Activated CD8-positive, alpha-beta T cell treated with anti-CD3 and anti-CD28 coated beads, Interleukin-2, amount 10 ng/mL, durations not matched to agents 7 days and 5 days (primary cell): ENCODE measurements at regions of chr17 and their contacts with region 1.

Region 1: DNA sequence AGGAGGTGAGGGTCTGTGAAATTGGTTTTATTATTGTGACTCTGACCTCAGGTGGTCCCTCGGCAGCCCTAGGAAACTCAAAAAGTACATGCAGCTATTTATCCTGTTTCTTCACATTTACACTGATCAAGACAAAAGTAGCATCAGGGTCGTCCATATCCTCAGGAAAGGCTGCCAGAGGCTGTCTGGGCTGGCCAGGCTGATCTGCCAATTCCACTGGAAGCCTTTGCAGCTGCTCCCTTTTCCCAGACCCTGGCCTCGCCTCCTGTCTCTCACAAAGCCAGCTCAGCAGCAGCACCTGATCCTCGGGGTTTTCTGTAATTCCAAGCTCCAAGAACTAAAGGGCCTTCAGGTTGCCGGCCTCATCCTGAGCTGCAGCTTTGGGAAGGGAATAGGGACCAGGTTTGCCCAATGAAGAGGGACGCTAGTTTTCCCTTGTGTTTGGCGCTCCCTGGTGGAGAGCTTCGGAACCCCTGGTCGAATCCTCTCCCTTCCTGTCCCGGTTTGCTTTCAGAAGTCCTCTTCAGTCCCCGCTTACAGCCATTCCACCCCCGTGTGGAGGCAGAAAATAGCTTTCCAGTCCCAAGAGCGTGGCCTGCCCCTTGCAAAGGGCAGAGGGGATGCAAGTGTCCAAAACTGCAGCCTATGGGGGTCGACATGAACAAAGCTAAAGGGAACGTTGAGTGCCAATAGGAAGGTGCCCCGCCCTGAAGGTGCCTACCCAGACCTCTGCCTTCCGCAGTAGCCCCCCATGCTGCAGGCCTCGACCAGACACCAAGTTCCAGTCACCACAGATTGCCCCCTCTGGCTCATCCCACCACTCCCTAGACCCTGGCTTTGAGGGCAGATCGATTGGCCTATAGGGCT is 13.4 kb downstream of the MFSD6L start:
- DNase-seq: peak; percentile 71
- ATAC-seq: peak; percentile 55
- H3K4me3 Mint-ChIP-seq: no peak overlapping the region
- H3K27ac Mint-ChIP-seq: no peak overlapping the region
- H3K4me1 Mint-ChIP-seq: peaks cover 17% of the 10 kb centered on the region
- H3K27me3 Mint-ChIP-seq: peaks cover 15% of the 10 kb centered on the region

Region 2: GRCh38 chr17:8753976-8754440 is 31.8 kb before region 1 on chr17:
- CTCF ChIA-PET with region 1: interaction called, 32 read pairs
- POLR2A ChIA-PET with region 1: no interaction called
- DNase-seq: no peak
- ATAC-seq: no peak
- H3K4me3 Mint-ChIP-seq: no peak overlapping the region
- H3K27ac Mint-ChIP-seq: no peak overlapping the region
- H3K4me1 Mint-ChIP-seq: no peaks in the 10 kb centered on the region
- H3K27me3 Mint-ChIP-seq: peaks cover 9% of the 10 kb centered on the region

Region 3: GRCh38 chr17:8894673-8895578 is 109.1 kb after region 1 on chr17:
- CTCF ChIA-PET with region 1: interaction called, 13 read pairs
- POLR2A ChIA-PET with region 1: no interaction called
- DNase-seq: peak; percentile 75
- ATAC-seq: no peak
- H3K4me3 Mint-ChIP-seq: no peak overlapping the region
- H3K27ac Mint-ChIP-seq: peak overlapping the region; percentile 26
- H3K4me1 Mint-ChIP-seq: peaks cover 71% of the 10 kb centered on the region
- H3K27me3 Mint-ChIP-seq: no peaks in the 10 kb centered on the region